Activated CD4-positive, alpha-beta T cell treated with anti-CD3 and anti-CD28 coated beads for 36 hours (primary cell): ENCODE measurements at regions of chr7 and their contacts with region 1.

Region 1: DNA sequence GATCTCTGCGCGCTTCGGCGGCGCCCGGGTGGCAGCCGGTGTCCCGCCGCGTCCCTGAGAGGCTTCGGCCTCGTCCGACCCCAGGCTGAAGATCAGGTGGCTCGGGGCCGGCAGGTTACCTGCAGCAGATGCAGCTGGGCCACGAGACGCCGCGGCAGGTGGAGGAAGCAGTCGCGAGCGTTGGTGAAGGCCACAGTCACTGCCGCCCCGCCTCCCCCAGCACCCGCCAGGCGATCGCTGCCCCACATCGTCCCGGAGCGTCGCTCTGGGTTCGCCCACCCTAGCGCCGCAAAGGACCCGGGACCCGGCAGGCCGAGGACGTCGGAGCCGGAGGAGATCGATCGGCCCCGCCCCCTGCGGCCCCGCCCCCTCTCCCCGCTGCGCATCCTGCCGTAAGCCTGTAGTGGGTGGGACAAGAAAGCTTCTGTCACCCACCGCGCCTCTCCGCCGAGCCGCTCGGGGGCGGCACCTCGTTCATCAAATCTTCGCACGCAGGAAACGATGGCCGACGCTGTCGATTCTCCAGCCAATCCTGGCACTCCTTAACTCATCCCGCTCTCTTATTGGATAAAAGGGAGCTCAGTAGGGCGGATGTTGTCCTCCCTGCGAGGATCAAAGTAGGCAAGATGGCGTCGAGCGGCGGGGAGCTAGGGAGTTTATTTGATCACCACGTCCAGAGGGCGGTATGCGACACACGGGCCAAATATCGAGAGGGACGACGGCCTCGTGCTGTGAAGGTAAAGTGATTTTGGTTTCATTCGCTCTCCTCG is at the starts of genes PEX1 and RBM48:
- DNase-seq: peak; percentile 98
- ATAC-seq: peak; percentile 95
- H3K4me3 Mint-ChIP-seq: peak within 1 kb of the TSS; percentile 90
- H3K27ac Mint-ChIP-seq: peak within 1 kb of the TSS; percentile 93
- H3K4me1 Mint-ChIP-seq: peaks cover 29% of the 10 kb centered on the region
- H3K27me3 Mint-ChIP-seq: no peaks in the 10 kb centered on the region
- total RNA-seq, gene PEX1: 14.7 to 16.0 TPM
- total RNA-seq, gene RBM48: 12.8 to 13.1 TPM

Region 2: DNA sequence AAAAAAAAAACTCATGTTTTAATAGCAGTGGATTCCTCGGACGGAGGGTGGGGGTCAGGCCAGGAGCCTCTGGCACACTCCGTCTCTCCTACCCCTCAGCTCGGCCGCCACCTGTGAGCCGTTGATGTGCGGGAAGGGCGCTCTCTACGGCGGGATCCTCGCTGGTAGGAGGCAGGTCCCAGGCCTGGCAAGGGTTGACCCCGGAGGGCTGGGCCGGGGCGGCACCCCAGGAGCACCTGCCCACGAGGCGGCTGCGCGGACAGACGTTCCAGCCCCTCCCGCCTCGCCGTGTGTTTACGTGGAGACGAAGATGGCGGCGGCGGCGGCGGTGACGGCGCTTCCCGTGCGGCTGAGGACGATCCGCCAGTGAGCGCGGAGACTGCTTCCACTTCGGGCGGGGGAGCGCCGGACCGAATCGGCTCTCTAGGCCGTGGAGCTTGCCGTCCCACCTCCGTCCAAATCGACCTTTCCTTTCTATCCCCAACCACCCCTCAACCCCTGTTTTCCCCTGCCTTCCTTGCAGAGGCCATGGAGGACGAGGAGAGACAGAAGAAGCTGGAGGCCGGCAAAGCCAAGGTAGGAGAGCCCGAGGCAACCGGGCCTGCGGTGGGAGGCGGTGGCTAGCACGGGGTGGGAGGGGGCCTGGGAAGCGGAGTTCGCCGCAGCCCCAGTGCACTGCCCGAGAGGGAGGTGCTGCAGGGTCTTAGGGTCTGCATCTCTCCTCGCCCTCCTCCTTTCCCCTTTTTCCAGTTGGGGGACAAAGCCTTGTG is 587.6 kb before region 1 on chr7 and contains the start of gene AKAP9:
- CTCF ChIA-PET with region 1: no interaction called
- POLR2A ChIA-PET with region 1: no interaction called
- intact Hi-C with region 1: loop called (anchors 2 to 5 kb)
- DNase-seq: peak; percentile 94
- ATAC-seq: peak; percentile 91
- H3K4me3 Mint-ChIP-seq: peak within 1 kb of the TSS; percentile 87
- H3K27ac Mint-ChIP-seq: peak within 1 kb of the TSS; percentile 94
- H3K4me1 Mint-ChIP-seq: peaks cover 29% of the 10 kb centered on the region
- H3K27me3 Mint-ChIP-seq: no peaks in the 10 kb centered on the region
- total RNA-seq, gene AKAP9: 25.3 to 25.4 TPM

Region 3: DNA sequence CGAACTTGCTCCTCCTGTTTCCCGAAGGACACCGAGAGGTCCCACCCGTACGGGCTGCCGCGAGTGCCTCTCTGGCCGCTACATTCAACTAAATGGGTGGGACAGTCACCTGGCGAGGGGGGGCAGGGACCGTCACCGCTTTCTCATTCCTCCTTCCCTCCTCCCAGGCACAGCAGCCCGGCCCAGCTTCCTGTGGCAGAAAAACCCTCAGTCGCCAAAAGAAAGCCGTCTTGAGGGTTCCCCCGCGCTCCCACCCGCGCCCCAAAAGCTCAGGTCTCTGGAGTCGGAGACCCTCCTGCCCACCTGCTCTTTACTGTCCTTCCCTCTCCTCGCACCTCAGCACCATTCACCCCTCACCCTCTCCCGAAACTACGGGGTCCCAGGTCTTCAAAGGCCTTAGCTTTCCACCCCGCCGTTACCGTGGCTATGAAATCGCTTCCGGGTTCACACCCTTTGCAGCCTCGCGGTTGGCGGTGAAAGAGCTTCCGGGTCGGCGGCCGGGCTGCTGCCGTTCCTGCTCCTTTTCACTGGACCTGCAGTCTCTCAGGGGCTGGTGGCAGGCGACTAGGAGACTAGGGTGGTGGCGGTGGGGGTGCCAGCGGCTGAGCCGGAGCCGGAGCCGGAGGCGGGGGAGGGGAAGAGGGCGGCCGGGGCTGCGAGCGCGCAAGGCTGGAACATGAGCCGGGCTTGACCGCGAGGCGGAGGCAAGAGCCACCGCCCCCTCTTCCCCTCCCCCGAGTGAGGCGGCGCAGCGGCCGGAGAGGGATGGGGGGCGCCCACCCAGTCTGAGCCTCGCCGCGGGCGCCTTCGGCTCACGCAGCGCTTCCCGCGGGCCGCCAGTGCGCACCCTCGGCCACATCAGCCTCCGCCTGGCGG is 282.6 kb before region 1 on chr7 and contains the starts of genes ANKIB1 and KRIT1:
- CTCF ChIA-PET with region 1: interaction called, 4 read pairs
- POLR2A ChIA-PET with region 1: interaction called, 4 read pairs
- intact Hi-C with region 1: loop called (anchors 1 kb)
- DNase-seq: peak; percentile 93
- ATAC-seq: peak; percentile 81
- H3K4me3 Mint-ChIP-seq: peak within 1 kb of the TSS; percentile 97
- H3K27ac Mint-ChIP-seq: peak within 1 kb of the TSS; percentile 98
- H3K4me1 Mint-ChIP-seq: peaks cover 26% of the 10 kb centered on the region
- H3K27me3 Mint-ChIP-seq: no peaks in the 10 kb centered on the region
- total RNA-seq, gene ANKIB1: 37.0 to 55.1 TPM
- total RNA-seq, gene KRIT1: 37.7 to 45.5 TPM

Region 4: DNA sequence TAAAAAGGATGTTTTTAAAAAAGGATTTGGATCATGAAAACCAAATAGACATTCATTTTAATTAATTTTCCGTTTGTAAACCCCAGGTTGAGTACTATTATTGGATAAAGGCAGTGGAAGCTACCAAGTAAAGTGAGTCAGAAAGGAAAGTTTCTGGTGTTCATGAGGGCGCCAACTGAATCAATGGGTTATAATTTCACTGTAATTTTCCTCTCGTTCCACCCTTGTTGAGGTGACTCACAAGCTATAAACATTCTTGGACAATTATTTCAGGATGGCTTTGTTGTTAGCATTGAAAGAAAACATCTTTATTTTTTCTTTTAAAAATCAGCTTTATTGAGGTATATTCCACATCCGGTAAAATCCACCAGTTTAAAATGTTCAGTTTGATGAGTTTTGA is 66.9 kb after region 1 on chr7:
- CTCF ChIA-PET with region 1: interaction called, 3 read pairs
- POLR2A ChIA-PET with region 1: interaction called, 4 read pairs
- intact Hi-C with region 1: loop called in 1 of 2 experiments (anchors 1 kb)
- DNase-seq: no peak
- ATAC-seq: no peak
- H3K4me3 Mint-ChIP-seq: no peak overlapping the region
- H3K27ac Mint-ChIP-seq: no peak overlapping the region
- H3K4me1 Mint-ChIP-seq: peaks cover 7% of the 10 kb centered on the region
- H3K27me3 Mint-ChIP-seq: peaks cover 3% of the 10 kb centered on the region

Region 5: DNA sequence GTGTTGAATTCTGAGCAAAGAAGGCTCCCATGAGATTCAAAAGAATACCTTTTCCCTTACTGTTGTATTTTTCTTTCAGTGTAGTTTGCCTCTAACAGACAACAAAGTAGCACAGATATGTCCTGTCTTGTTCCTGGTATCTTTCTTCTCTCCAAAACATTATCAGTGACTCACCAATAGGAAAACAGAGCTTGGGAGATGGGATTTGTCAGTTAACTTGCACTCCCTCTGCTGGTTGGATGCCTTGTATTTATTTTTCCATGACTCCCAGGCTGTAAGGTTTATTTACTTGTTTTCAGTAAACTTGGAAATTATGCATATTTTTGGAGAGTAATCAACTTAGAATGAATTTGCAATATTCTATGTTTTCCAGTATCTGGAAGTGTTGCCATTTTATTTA is 459.7 kb after region 1 on chr7:
- CTCF ChIA-PET with region 1: no interaction called
- POLR2A ChIA-PET with region 1: no interaction called
- intact Hi-C with region 1: no loop called
- DNase-seq: no peak
- ATAC-seq: no peak
- H3K4me3 Mint-ChIP-seq: no peak overlapping the region
- H3K27ac Mint-ChIP-seq: no peak overlapping the region
- H3K4me1 Mint-ChIP-seq: no peaks in the 10 kb centered on the region
- H3K27me3 Mint-ChIP-seq: peaks cover 7% of the 10 kb centered on the region

Region 6: DNA sequence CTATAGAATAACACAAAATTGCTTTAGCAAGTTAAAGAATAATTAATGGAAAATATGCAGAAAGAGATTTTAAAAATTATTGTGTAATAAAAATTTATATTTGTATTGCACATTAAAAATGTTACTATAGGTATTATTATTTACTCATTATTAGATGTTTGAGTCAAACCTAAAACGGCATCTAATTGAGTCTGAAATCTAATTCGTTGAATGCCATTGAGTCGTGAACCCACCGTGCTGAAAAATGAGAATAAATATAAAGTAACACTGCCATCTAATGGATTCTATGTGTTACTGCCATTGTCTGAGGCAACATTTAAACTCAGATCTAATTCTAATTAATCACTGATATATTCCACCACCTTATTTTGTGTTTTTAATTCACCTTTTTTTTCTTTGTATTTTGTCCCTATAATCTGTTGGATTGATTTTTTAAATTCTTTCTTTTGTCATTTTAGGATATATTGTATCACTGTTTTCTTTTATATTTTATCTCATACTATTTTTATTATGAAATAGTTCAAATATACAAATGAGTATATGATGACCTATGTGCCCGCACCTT is 527.3 kb after region 1 on chr7:
- CTCF ChIA-PET with region 1: no interaction called
- POLR2A ChIA-PET with region 1: no interaction called
- intact Hi-C with region 1: loop called in 1 of 2 experiments (anchors 1 kb)
- DNase-seq: no peak
- ATAC-seq: peak; percentile 74
- H3K4me3 Mint-ChIP-seq: no peak overlapping the region
- H3K27ac Mint-ChIP-seq: no peak overlapping the region
- H3K4me1 Mint-ChIP-seq: peaks cover 9% of the 10 kb centered on the region
- H3K27me3 Mint-ChIP-seq: peaks cover 13% of the 10 kb centered on the region

Region 7: DNA sequence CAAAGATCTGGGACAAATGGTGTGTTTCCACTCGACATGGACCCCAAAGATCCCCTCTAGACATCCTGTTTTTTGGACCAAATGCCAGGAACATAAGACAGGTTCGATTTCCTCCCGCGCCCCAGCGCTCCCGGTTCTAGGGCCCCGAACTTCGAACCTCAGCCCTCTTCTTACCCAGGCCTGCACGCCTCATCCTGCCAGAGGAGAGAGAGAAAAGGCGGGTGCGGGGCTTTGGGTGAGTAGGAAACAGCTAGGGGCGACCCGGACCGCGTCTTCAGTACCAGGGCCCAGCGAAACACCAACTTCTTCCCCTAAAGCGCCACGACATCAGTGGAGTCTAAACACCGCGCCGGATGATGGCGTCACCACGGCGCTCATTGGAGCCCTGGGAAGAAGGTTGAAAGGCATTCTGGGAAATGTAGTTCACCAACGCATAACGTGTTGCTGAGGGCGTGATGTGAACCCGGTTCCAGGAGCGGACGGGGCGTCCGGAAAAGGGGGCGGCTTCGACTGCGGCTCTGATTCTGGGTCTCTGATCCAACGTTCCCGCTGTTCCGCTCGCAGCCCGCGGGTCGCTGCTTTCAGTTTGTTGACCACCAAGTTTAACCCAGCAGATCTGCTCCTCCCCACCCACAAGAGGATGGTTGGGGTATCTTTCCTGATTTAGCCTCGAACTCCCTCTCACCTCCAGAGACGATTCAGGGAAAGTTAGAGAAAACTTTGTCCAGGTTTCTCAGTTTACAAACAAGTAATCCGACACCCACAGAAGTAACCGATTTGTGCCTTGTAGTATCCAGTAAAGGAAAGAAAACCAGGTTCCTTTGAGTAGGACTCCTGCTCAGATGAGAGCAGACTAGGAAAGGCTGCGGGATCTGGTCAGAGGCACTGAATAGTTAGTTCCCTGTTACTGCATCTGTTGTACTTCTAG is 1475.9 kb after region 1 on chr7 and contains the start of gene BET1:
- CTCF ChIA-PET with region 1: no interaction called
- POLR2A ChIA-PET with region 1: no interaction called
- intact Hi-C with region 1: loop called in 1 of 2 experiments (anchors 5 kb)
- DNase-seq: peak; percentile 95
- ATAC-seq: peak; percentile 96
- H3K4me3 Mint-ChIP-seq: peak within 1 kb of the TSS; percentile 98
- H3K27ac Mint-ChIP-seq: peak within 1 kb of the TSS; percentile 97
- H3K4me1 Mint-ChIP-seq: peaks cover 36% of the 10 kb centered on the region
- H3K27me3 Mint-ChIP-seq: peaks cover 6% of the 10 kb centered on the region
- total RNA-seq, gene BET1: 16.9 to 19.8 TPM